GM18951 (cell line): ENCODE measurements at regions of chr17 and their contacts with region 1.

Region 1: DNA sequence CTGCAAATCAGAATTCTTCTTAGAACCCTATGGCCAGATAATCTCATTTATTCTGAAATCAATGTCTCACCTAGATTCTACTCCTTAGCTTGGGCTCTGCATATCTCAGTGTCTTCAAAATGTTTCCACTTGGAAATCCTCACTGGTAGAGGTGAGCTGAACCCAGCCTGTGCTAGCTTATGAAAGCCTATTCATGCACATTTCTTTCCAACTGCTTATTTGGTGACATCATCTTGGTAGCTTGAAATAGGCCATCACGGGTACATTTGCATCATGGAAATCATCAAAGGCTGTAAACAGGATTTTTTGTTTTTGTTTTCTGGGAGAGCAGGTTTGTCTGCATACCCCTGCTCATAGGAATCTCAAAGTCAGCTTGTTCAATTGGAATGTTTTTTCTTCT is 130.8 kb downstream of the KCNJ18 start:
- POLR2A ChIP-seq: no peak

Region 2: GRCh38 chr17:21772321-21772720 is 50.8 kb before region 1 on chr17:
- in situ Hi-C with region 1: loop called (anchors 10 kb)
- POLR2A ChIP-seq: no peak